Activated CD4-positive, alpha-beta T cell treated with anti-CD3 and anti-CD28 coated beads, Interleukin-2, amount 10 ng/mL, durations not matched to agents 24 days and 14 days (primary cell): ENCODE measurements at regions of chr21 and their contacts with region 1.

Region 1: DNA sequence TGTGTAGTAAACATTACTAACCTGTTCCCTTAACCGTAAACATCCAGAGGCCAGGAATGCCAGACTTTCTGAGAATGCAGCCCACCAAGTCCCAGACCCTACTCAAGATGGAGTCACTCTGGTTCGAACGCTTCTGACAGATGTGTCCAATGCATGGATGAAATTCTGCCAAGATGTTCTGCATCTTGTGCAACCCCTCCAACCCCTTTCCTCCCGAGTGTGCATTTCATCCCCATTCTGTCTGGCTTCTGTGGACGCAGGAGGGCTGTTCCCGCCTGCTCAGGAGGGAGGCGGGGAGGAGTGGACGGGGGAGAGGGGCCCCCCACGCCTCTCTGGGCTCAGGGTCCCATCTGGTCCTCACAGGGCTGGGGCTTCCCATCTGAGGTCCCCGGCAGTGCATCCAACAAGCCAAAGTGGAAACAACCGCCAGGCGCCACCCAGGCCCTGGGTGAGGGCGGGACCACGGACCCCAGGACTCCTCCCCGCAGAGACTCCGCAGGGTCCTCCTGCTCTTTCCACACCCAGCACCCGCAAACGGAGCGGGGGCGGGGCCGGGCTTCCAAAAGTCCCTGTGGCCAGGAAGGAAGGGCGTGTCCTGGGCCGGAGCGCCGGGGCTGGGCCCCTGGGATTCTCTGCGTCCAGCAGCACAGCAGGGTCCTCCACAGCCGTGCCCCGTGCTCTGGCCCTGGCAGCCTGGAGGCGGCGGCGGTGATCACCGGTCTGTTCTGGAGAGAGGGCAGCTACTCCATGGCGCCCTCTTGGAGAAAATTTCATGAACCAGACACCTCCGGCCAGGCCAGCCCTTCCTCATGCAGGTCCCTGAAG is 27.7 kb upstream of the SUMO3 start:
- DNase-seq: peak; percentile 91
- H3K4me3 Mint-ChIP-seq: peak overlapping the region; percentile 73
- H3K27ac Mint-ChIP-seq: peak overlapping the region; percentile 70
- H3K4me1 Mint-ChIP-seq: peaks cover 10% of the 10 kb centered on the region
- H3K27me3 Mint-ChIP-seq: no peaks in the 10 kb centered on the region

Region 2: GRCh38 chr21:44697811-44698734 is 147.5 kb before region 1 on chr21:
- intact Hi-C with region 1: no loop called
- DNase-seq: no peak
- H3K4me3 Mint-ChIP-seq: no peak overlapping the region
- H3K27ac Mint-ChIP-seq: no peak overlapping the region
- H3K4me1 Mint-ChIP-seq: no peaks in the 10 kb centered on the region
- H3K27me3 Mint-ChIP-seq: peaks cover 58% of the 10 kb centered on the region

Region 3: GRCh38 chr21:44730951-44731579 is 114.5 kb before region 1 on chr21:
- intact Hi-C with region 1: no loop called
- DNase-seq: no peak
- H3K4me3 Mint-ChIP-seq: no peak overlapping the region
- H3K27ac Mint-ChIP-seq: no peak overlapping the region
- H3K4me1 Mint-ChIP-seq: no peaks in the 10 kb centered on the region
- H3K27me3 Mint-ChIP-seq: peaks cover 10% of the 10 kb centered on the region

Region 4: GRCh38 chr21:44865561-44866280 is 20.1 kb after region 1 on chr21:
- intact Hi-C with region 1: loop called (anchors 2 kb)
- DNase-seq: no peak
- H3K4me3 Mint-ChIP-seq: peak overlapping the region; percentile 65
- H3K27ac Mint-ChIP-seq: peak overlapping the region; percentile 84
- H3K4me1 Mint-ChIP-seq: peaks cover 58% of the 10 kb centered on the region
- H3K27me3 Mint-ChIP-seq: no peaks in the 10 kb centered on the region

Region 5: DNA sequence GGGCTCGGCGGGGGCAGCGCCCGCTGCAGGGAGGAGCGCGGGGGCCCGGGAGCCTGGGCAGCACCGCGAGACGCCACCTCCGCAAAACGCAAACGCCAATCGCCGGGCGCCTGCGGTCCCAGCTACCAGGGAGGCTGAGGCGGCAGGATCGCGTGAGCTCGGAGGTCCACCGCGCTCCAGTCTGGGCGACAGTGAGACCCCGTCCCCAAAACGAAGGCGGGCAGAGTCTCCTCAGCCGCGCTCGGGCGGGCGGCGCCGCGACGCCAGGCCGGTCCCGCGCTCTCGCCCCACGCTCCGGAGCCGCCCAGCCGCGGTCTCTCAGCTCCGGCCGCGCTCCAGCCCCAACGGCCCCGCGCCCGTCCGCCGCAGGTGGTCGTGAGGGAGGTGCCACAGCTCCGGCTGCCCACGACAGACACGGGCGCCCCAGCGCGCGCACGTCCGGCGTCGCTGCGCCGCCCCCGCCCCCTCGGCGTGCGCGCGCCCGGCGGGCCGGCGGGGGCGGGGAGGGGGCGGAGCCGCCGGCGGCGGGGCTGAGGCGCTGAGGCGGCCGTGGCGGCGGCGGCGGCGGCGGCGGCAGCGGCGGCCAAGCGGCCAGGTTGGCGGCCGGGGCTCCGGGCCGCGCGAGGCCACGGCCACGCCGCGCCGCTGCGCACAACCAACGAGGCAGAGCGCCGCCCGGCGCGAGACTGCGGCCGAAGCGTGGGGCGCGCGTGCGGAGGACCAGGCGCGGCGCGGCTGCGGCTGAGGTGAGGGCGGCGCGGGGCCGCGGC is 228.6 kb after region 1 on chr21 and contains the start of gene ADARB1:
- intact Hi-C with region 1: no loop called
- DNase-seq: peak; percentile 91
- H3K4me3 Mint-ChIP-seq: peak within 1 kb of the TSS; percentile 95
- H3K27ac Mint-ChIP-seq: peak within 1 kb of the TSS; percentile 91
- H3K4me1 Mint-ChIP-seq: peaks cover 39% of the 10 kb centered on the region
- H3K27me3 Mint-ChIP-seq: peaks cover 3% of the 10 kb centered on the region
- total RNA-seq, gene ADARB1: 21.8 and 24.6 TPM in 2 replicates